Heart left ventricle (tissue), 16 donors: ENCODE measurements at regions of chr1 and their contacts with region 1.

Region 1: DNA sequence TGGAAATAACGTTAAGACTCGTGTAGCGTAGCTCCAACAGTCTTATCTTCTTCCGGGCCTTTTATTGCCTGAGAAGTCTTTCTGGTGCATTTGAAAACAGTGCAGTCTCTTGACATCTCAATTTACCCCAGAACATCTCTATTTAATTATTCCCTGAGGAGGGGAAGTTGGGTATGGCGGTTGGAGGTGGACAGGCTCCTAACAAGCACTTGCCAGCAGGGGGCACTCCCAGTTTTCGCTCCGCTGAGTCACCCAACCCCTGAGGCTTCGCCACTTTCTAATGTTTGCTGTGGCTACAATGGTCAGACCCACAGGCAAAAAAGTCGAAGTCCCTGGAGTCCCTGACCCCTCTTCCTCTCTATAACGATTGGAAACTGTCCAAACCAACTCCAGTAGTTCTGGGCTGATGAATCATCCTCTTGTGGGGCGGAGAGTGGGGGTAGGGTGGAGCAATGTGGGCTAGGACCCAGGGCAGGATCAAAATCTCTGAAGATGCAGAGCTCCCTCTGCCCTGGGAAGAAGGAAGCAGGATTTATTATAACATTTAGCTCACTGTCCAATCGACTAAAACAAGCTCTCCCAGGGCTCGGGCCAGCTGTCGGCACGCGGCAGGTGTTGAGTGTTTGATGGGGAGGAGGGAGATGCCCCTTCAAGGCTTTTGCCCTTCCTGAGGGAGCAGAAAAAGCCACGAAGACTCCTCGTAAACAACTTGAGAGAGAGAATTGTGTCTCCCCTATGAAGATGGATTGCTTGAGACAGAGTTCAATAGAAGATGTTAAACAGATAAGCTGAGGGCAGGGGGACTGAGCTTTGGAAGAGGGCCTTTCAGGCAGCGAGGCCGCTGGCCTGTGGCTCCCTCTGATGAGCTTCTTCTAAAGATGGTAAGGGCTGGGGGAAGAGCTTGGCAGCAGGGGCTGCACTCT is 85.7 kb downstream of the BRINP2 start:
- DNase-seq: peak; percentile 60 to 77 (median 64)
- ATAC-seq: peak; percentile 37 to 92 (median 86)
- H3K4me3 ChIP-seq: no peak overlapping the region
- H3K27ac ChIP-seq: no peak overlapping the region
- H3K4me1 ChIP-seq: peaks cover 0 to 11% (median 2%) of the 10 kb centered on the region in 12 donors
- H3K27me3 ChIP-seq: peaks cover 0 to 8% (median 0%) of the 10 kb centered on the region in 9 donors
- CTCF ChIP-seq: peak; percentile 43 to 72 (median 62)
- POLR2A ChIP-seq: no peak

Region 2: GRCh38 chr1:177346790-177347359 is 90.5 kb after region 1 on chr1:
- intact Hi-C with region 1: loop called in 2 of 10 experiments (anchors 5 to 10 kb)
- DNase-seq: no peak
- ATAC-seq: no peak
- H3K4me3 ChIP-seq: no peak overlapping the region
- H3K27ac ChIP-seq: no peak overlapping the region
- H3K4me1 ChIP-seq: no peaks in the 10 kb centered on the region
- H3K27me3 ChIP-seq: peaks cover 0 to 6% (median 0%) of the 10 kb centered on the region in 9 donors
- CTCF ChIP-seq: no peak
- POLR2A ChIP-seq: no peak

Region 3: DNA sequence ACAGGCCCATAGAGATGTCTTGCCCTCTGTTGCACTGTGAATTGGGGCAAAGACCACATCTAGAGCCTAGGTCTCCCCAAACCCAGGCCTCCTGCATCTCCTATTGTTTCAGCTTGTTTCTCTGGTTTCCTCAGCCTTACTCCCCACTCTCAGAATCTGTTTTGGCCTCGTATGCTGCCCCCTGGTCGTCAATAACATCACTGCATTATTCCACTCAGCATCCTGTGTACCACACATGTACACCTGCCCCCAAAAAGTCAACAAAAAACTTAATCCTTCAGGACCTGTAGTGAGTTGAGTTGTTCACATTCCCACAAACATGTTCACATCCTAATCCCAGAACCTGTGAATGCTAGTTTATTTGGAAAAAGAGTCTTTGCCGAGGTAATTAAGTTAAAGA is 99.2 kb after region 1 on chr1:
- intact Hi-C with region 1: loop called in 8 of 10 experiments (anchors 2 to 10 kb)
- DNase-seq: no peak
- ATAC-seq: peak in 2 of 4 donors; percentile 42 to 68
- H3K4me3 ChIP-seq: no peak overlapping the region
- H3K27ac ChIP-seq: no peak overlapping the region
- H3K4me1 ChIP-seq: no peaks in the 10 kb centered on the region
- H3K27me3 ChIP-seq: peaks cover 0 to 28% (median 0%) of the 10 kb centered on the region in 9 donors
- CTCF ChIP-seq: peak in 11 of 12 donors; percentile 19 to 54 (median 36)
- POLR2A ChIP-seq: no peak

Region 4: DNA sequence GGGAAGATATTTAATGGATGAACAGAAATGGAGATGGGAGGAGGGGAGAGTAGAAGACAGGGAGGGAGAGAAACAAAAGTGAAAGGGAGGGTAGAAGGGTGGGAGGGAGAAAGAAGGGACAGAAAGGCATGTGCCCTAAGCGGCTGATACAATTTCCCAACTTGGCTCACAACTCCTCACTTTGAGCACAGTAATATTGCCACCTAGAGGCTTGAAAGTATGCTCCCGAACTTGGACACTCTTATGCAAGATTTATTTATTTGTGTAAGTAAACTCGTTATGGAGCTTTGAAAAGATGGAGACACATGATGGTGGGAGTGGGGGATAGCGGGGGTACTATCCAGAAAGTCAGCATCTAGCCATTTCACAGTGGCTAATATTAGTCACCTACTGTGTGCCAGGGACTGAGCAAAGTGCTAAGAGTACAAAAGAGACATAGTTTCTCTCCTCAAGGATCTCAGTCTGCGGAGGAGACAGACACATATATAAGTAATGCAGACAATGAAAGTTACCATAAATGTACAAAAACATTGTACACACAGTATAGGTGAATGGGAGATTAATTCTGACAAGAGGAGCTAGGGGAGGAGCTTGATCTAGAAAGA is 523.8 kb after region 1 on chr1:
- intact Hi-C with region 1: loop called in 8 of 10 experiments (anchors 2 to 10 kb)
- DNase-seq: no peak
- ATAC-seq: peak in 3 of 4 donors; percentile 56 to 64 (median 62)
- H3K4me3 ChIP-seq: no peak overlapping the region
- H3K27ac ChIP-seq: no peak overlapping the region
- H3K4me1 ChIP-seq: no peaks in the 10 kb centered on the region
- H3K27me3 ChIP-seq: peaks cover 0 to 14% (median 0%) of the 10 kb centered on the region in 9 donors
- CTCF ChIP-seq: peak; percentile 22 to 65 (median 44)
- POLR2A ChIP-seq: no peak

Region 5: DNA sequence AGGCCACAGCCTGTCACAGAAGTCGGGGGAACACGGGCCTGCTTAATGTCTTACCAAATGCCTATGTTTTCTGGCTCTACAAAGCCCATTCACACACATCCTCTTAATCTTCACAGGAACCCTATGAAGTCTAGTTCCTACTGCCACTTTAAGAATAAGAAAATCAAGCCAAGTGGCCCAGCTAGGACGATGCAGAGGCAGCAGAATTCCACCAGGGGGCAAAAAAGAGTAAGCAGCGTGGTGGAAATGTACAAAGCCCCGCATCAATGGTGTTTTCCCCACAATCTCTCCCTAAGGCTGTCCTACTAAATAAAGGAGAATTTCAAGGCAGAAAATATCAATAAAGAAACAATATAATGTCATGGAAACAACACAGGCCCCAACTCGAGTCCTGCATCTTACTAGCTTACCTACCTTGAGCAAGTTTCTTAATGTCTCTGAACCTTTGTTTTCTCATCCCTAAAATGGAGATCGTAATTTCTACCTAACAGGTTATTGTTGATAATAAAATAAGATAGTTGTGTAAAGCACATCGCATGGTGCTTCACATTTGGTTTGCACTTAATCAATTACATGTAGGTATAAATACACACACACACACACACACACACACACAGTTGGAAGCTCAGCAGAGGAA is 692.0 kb after region 1 on chr1:
- intact Hi-C with region 1: loop called in 7 of 10 experiments (anchors 5 to 10 kb)
- DNase-seq: peak in 2 of 5 donors; percentile 40 to 45
- ATAC-seq: peak; percentile 24 to 67 (median 56)
- H3K4me3 ChIP-seq: no peak overlapping the region
- H3K27ac ChIP-seq: no peak overlapping the region
- H3K4me1 ChIP-seq: peaks cover 0 to 8% (median 0%) of the 10 kb centered on the region in 12 donors
- H3K27me3 ChIP-seq: no peaks in the 10 kb centered on the region
- CTCF ChIP-seq: peak; percentile 73 to 95 (median 86)
- POLR2A ChIP-seq: no peak